ENCODE measurements at regions of chr1 and their contacts with region 1.

Region 1: GRCh38 chr1:39438042-39438441 is 53.4 kb upstream of the BMP8A start:
- DNase-seq: no peak
- ATAC-seq: no peak
- H3K4me3 ChIP-seq: no peak overlapping the region
- H3K27ac ChIP-seq: no peak overlapping the region
- H3K4me1 ChIP-seq: no peaks in the 10 kb centered on the region
- H3K27me3 ChIP-seq: no peaks in the 10 kb centered on the region
- CTCF ChIP-seq: no peak
- EP300 ChIP-seq: no peak
- POLR2A ChIP-seq: no peak
- RAD21 ChIP-seq: no peak

Region 2: DNA sequence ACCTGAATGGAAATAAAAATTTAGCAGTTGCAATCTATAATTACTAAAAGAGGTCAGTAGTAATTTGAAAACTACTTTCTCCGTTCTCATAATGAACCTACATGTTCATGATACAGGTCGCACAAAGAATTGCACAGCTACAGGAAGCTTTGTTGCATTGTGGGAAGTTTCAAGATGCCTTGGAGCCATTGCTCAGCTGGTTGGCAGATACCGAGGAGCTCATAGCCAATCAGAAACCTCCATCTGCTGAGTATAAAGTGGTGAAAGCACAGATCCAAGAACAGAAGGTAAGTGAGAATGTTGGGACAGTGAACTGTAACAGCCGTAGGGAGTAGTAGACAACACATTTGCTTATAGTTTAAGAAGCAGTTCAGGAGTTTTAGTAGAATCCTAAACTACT is 15.4 kb before region 1 on chr1:
- CTCF ChIA-PET with region 1: no interaction called
- POLR2A ChIA-PET with region 1: interaction called, 10 read pairs
- in situ Hi-C with region 1: no loop called
- intact Hi-C with region 1: no loop called
- DNase-seq: peak in 2 of 4 experiments; percentile 61 to 65
- ATAC-seq: 0 out of 3 replicates have a peak, but pooled peaks have one; percentile 36
- H3K4me3 ChIP-seq: no peak overlapping the region
- H3K27ac ChIP-seq: no peak overlapping the region
- H3K4me1 ChIP-seq: no peaks in the 10 kb centered on the region
- H3K27me3 ChIP-seq: no peaks in the 10 kb centered on the region
- CTCF ChIP-seq: no peak
- EP300 ChIP-seq: no peak
- POLR2A ChIP-seq: no peak
- RAD21 ChIP-seq: no peak